ENCODE measurements at regions of chr11 and their contacts with region 1.

Region 1: DNA sequence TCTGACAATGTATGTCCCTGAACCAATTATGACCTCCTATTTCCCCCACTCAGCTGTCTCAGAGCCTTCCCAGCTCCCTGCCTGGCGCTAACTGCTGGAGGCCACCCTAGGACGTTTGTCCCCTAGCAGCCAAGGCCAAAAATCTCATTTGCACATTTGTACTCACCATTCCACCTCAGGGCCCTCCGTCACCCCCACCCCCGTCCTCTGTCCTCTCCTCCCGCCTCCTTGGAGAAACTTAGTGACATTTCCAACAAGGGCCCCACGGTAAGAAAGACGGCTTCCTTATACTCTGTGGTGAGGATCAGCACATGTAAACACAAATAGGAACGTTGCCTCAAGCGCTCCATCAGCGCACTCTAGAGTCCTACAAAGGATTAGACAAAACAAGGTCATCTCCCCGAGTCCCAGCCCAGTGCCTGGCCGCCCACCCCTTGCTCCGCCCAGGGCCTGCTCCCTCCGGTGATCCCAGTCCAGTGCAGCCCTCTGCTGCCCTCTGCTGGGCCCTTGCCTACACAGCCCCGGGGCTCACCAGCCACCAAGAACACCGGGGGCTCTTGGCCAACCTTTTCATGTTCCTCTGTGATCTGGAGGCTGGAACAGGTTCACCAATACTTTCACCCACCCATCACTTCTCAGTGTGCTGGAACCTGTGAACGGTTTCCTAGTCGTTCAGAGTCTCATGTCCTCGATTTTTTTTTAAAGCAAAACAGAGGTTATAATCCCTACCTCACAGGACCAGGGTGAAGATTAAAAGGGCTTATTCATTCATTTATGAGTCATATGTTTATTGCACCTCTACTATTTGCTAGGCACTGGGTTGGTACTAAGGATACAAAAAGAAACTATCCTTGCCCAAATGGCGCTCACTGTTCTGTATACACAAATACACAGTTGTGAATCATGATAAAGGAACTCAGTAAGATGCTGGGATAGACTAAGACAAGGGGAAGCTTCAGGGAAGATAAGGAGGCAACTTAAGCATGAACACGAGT is 15.3 kb upstream of the CTR9 start:
- DNase-seq: peak; percentile 90 to 93
- H3K4me3 ChIP-seq: peak overlapping the region; percentile 39; the same call in 1 of the 2 replicates
- H3K27ac ChIP-seq: peak overlapping the region; percentile 78
- H3K4me1 ChIP-seq: peaks cover 5% of the 10 kb centered on the region; the same call in 1 of the 2 replicates
- H3K27me3 ChIP-seq: no peaks in the 10 kb centered on the region
- CTCF ChIP-seq: peak; percentile 90

Region 2: GRCh38 chr11:10322830-10323792 is 412.7 kb before region 1 on chr11:
- CTCF ChIA-PET with region 1: no interaction called
- POLR2A ChIA-PET with region 1: no interaction called
- intact Hi-C with region 1: loop called (anchors 1 kb)
- DNase-seq: peak; percentile 42 to 85
- H3K4me3 ChIP-seq: no peak overlapping the region; the same call in 1 of the 2 replicates
- H3K27ac ChIP-seq: peak overlapping the region; percentile 88
- H3K4me1 ChIP-seq: peaks cover 46% of the 10 kb centered on the region
- H3K27me3 ChIP-seq: no peaks in the 10 kb centered on the region
- CTCF ChIP-seq: peak; percentile 58

Region 3: GRCh38 chr11:10488581-10489443 is 247.0 kb before region 1 on chr11:
- CTCF ChIA-PET with region 1: no interaction called
- POLR2A ChIA-PET with region 1: no interaction called
- intact Hi-C with region 1: loop called (anchors 2 kb)
- DNase-seq: peak; percentile 40 to 68
- H3K4me3 ChIP-seq: no peak overlapping the region
- H3K27ac ChIP-seq: peak overlapping the region; percentile 74
- H3K4me1 ChIP-seq: peaks cover 54% of the 10 kb centered on the region
- H3K27me3 ChIP-seq: no peaks in the 10 kb centered on the region
- CTCF ChIP-seq: no peak

Region 4: DNA sequence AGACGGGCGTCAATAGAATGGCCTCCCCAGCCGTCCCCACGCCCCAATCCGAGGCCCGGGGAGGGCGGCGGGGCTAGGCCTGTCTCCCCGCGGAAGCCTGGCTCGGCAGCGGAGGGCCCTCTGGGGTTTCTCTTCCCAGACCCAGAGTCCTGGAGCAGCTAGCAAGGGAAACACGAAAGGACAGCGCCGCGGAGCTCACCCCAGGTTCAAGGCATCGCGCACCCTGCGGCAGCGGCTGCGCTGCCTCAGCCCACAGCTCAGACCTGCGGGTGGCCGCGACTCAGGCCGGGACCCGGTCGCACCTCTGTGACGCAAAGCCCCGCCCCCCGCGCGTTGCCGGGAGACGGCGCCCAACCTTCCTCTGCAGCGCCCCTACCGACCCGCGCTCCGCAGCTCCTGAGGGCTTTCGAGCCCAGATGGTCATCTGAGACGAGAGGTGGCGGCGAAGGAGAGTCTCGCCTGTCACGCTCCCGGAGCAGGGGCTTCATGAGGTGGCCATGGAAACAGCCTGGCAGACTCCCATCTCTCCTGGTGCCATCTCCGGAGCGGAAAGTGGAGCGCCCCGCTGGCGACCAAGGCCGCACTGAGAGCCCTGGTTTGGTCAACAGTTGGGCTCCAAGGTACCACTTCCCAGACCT is 194.7 kb before region 1 on chr11 and contains the start of gene RNF141:
- CTCF ChIA-PET with region 1: interaction called, 13 read pairs
- POLR2A ChIA-PET with region 1: no interaction called
- intact Hi-C with region 1: loop called (anchors 1 kb)
- DNase-seq: peak; percentile 74 to 93
- H3K4me3 ChIP-seq: peak within 1 kb of the TSS; percentile 89
- H3K27ac ChIP-seq: peak within 1 kb of the TSS; percentile 69
- H3K4me1 ChIP-seq: peaks cover 21% of the 10 kb centered on the region
- H3K27me3 ChIP-seq: no peaks in the 10 kb centered on the region
- CTCF ChIP-seq: peak; percentile 59; the same call in 1 of the 2 replicates
- total RNA-seq, gene RNF141: 33.7 and 36.8 TPM in 2 replicates

Region 5: DNA sequence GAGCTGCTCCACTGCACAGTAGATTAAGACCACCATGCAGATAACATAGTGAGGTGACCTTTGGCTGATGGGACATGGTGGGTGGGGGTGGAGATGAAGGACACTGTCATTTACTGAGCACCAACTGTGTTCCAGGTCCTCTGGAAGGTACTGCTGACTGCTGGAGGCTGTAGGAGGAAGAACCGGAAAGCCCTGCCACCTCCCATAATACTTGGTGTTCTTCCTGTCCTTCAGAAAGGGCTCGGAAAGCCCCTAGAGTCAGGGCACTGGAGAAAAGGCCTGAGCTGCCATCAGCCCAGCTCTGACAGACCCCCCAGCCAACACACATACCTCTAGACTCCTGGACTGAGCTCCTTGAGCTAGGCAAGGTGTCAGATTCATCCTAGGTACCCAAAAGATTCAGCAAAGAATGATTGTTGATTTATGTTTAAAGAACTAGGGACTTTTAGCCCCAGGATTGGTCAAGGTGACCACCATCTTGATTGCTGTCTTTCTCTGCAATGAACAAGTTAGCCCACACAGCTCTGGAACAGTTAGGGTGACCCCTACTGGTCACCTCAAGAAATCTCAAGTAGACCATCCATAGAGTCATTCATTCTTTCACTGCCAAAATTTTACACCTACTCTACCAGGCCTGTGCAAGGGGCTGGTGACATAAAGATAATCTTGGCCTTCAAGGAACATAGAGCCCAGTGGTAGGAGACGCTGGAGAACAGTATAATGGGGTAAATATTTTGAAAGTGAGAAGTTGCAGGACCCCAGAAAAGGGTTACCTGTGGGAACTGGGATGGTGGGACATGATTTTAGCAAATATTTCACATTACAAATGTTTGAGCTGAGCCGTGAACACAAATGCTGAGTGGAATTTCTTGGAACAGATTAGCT is 81.6 kb before region 1 on chr11:
- CTCF ChIA-PET with region 1: no interaction called
- POLR2A ChIA-PET with region 1: no interaction called
- intact Hi-C with region 1: loop called (anchors 1 kb)
- DNase-seq: no peak
- H3K4me3 ChIP-seq: no peak overlapping the region
- H3K27ac ChIP-seq: peak overlapping the region; percentile 62; the same call in 1 of the 2 replicates
- H3K4me1 ChIP-seq: peaks cover 42% of the 10 kb centered on the region
- H3K27me3 ChIP-seq: no peaks in the 10 kb centered on the region
- CTCF ChIP-seq: peak; percentile 67